Tibial artery (tissue), 4 donors: ENCODE measurements at regions of chr20 and their contacts with region 1.

Region 1: DNA sequence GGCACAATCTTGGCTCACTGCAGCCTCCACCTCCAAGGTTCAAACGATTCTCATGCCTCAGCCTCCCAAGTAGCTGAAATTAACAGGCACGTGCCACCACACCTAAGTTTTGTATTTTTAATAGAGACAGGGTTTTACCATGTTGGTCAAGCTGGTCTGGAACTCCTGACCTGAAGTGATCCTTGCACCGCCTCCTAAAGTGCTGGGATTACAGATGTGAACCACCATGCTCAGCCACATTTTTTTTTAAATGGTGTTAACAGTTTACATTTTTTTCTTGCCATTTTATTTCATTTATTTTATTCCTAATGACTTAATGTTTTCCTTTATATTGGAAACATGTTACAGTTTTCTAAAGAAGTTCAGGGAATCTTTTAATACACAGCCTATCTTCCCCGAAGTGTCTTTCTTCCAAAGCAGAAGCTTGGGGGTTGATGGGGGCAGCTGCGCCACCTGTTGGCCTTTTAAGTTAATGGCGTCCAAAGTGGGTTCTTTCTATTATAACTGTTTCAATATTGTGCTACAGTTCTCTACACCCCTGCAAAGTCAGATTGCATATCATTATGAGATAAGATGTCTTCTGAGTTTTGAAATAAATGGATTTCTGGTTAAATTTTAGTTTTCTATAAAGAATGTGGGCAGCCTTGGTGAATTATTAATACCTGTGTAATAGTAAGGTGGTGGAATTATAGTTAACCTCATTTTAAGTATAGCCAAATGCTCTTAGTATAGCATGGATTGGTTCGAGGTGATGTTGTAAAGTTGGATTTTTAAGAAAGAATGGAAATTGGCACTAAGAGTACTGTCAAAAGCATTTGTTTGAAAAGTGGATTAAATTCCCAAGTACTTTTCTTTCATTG is 42.0 kb upstream of the PLCG1 start:
- DNase-seq: peak in 1 of 2 donors; percentile 40
- H3K4me3 ChIP-seq: no peak overlapping the region
- H3K27ac ChIP-seq: no peak overlapping the region
- H3K4me1 ChIP-seq: no peaks in the 10 kb centered on the region
- H3K27me3 ChIP-seq: no peaks in the 10 kb centered on the region
- CTCF ChIP-seq: peak; percentile 83 to 87

Region 2: DNA sequence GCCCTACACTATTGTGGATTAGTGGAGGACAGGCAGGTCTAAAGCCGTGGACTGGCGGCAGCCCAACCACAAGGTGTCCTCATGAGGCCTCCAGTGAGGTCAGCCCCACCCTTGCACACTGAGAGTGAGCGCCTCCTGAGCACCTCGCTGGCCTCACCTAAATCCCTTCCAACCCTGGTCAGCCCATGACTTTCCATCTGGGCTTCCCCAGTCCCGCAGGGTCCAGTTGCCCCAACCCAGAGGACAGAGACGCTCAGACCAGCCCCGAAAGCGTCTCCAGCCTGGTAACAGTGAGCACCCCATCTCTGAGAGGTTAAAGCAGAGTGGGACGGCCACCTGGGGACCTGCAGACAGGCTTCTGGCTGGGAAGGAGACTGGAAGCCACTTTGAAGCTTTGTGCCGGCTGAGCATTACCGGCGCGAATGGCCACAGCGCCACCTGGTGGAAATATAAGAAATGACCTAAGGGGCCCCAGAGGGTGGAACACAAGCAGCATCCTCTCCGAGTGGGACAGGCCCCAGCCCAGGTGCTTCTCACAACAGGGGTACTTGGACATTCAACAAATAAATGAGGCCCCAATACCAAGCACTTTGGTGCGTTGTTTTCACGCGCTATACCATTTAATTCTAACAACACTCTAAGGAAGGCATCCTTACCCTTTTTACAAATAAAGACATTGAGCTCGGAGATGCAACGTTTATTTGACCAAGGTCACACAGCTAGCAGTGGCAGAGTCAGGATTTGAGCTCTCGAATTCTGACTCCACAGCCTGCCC is 132.4 kb before region 1 on chr20:
- intact Hi-C with region 1: loop called (anchors 10 kb)
- DNase-seq: peak; percentile 47 to 77
- H3K4me3 ChIP-seq: no peak overlapping the region
- H3K27ac ChIP-seq: no peak overlapping the region
- H3K4me1 ChIP-seq: peaks cover 0 to 13% (median 3%) of the 10 kb centered on the region in 4 donors
- H3K27me3 ChIP-seq: peaks cover 0 to 3% of the 10 kb centered on the region in 2 donors
- CTCF ChIP-seq: peak; percentile 85 to 88